Activated B cell treated with CpG ODN at 0.5 μM for 24 hours (primary cell): ENCODE measurements at regions of chr1 and their contacts with region 1.

Region 1: DNA sequence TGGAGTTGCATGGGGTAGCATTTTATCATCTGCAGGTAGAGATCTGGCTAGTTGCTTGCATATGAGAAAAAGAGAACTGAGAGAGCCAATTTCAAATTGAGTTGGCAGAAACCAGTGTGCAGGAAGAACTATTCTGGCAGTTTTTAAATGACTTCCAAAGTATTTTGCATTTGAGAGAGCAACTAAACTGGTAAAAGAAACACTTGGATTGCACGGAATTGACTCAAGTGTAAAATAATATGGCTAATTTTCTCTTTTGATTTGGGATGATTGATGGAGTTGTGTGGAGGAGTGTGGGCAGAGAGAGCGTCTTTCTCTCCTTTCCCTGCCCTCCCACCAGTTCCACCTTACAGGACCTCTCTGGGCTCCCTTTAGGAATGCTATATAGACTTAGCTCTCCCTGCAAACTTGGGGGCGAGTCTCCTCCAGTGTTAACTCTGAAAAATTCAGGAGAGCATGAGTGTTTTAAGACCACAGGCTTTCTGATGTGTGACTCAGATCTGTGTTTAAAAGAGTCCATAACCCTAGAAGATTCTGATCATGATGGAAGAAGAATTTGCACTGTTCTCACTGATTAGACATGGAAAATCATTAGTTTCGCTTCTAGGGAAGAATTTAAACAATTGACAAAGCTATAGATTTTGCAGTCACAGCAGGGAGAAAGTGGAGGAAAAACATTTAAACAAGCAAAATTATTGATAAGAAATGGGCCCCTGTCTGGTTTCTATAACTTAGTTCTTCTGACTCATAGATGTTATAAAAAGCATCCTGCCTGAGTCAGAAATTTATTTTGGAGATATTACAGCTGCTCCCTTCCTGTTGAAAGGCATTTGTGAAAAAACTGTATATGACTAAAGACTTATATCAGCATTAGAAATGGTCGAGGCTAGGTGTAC is 24.9 kb upstream of the CTBS start:
- DNase-seq: no peak
- ATAC-seq: peak; percentile 63
- H3K4me3 Mint-ChIP-seq: peak overlapping the region; percentile 53
- H3K27ac Mint-ChIP-seq: peak overlapping the region; percentile 88
- H3K4me1 Mint-ChIP-seq: peaks cover 17% of the 10 kb centered on the region
- H3K27me3 Mint-ChIP-seq: no peaks in the 10 kb centered on the region
- CTCF ChIP-seq: no peak

Region 2: GRCh38 chr1:84478876-84479868 is 119.9 kb before region 1 on chr1 and contains the start of gene RPF1:
- CTCF ChIA-PET with region 1: no interaction called
- POLR2A ChIA-PET with region 1: no interaction called
- intact Hi-C with region 1: no loop called
- DNase-seq: peak; percentile 64
- ATAC-seq: peak; percentile 96
- H3K4me3 Mint-ChIP-seq: peak within 1 kb of the TSS; percentile 97
- H3K27ac Mint-ChIP-seq: peak within 1 kb of the TSS; percentile 97
- H3K4me1 Mint-ChIP-seq: peaks cover 37% of the 10 kb centered on the region
- H3K27me3 Mint-ChIP-seq: peaks cover 21% of the 10 kb centered on the region
- CTCF ChIP-seq: no peak
- total RNA-seq, gene RPF1: 42.8 and 46.3 TPM in 2 replicates

Region 3: DNA sequence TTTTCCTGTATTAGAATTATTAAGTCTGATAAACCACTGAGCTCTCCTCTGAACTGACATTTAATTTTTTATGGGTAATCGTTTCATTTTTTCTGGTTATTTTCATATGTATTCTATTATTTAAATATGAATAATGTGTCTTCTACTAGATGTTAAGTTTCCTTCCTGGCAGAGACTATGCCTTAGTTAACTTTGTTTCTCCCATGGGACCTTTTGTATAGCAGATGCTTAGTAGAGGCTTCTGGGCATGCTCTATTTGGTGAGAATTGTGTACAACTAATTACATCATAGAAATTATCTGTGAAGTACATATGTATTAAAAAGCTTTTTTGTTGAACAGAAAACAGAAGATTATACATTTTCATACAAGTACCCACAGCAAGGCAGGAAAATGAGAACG is 48.3 kb before region 1 on chr1:
- CTCF ChIA-PET with region 1: no interaction called
- POLR2A ChIA-PET with region 1: no interaction called
- intact Hi-C with region 1: no loop called
- DNase-seq: no peak
- ATAC-seq: no peak
- H3K4me3 Mint-ChIP-seq: no peak overlapping the region
- H3K27ac Mint-ChIP-seq: no peak overlapping the region
- H3K4me1 Mint-ChIP-seq: no peaks in the 10 kb centered on the region
- H3K27me3 Mint-ChIP-seq: no peaks in the 10 kb centered on the region
- CTCF ChIP-seq: no peak

Region 4: DNA sequence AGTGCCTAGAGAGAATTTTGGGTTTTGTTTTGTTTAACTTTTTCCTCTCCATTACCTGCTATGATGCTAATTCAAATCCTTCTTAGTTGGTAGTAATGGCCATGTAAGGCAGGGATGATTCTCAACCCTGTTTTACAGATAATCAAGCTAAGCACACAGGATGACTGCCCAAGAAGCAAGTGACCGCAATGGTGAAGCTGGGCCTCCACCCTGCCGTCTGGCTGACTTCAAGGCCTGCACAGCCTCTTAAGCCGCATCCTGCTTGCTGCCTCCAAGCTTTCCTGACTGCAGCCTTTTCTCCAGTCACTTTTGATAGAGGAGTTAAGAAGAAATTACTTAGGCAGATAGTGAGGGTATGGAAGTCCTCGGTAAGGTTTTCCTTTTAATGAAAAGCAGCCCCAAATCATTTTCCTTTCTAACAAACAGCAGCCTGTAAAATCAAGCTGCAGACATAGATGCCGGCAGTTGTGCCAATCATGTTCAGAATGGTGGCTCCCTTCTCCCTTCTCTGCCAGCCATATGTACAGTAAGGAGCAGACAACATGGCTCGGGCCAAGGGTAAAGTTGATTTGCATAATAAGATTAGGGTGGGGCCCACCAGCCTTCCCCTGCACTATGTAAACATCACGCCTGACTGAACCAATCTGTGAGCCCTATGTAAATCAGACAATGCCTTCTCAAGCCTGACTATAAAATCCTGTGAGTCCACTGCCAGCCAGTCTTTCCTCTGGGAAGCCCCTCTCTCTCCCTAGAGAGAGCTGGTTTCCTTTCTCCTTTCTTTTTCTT is 16.1 kb before region 1 on chr1:
- CTCF ChIA-PET with region 1: no interaction called
- POLR2A ChIA-PET with region 1: no interaction called
- intact Hi-C with region 1: loop called (anchors 1 kb)
- DNase-seq: no peak
- ATAC-seq: peak; percentile 88
- H3K4me3 Mint-ChIP-seq: peak overlapping the region; percentile 21
- H3K27ac Mint-ChIP-seq: peak overlapping the region; percentile 72
- H3K4me1 Mint-ChIP-seq: peaks cover 24% of the 10 kb centered on the region
- H3K27me3 Mint-ChIP-seq: no peaks in the 10 kb centered on the region
- CTCF ChIP-seq: no peak

Region 5: DNA sequence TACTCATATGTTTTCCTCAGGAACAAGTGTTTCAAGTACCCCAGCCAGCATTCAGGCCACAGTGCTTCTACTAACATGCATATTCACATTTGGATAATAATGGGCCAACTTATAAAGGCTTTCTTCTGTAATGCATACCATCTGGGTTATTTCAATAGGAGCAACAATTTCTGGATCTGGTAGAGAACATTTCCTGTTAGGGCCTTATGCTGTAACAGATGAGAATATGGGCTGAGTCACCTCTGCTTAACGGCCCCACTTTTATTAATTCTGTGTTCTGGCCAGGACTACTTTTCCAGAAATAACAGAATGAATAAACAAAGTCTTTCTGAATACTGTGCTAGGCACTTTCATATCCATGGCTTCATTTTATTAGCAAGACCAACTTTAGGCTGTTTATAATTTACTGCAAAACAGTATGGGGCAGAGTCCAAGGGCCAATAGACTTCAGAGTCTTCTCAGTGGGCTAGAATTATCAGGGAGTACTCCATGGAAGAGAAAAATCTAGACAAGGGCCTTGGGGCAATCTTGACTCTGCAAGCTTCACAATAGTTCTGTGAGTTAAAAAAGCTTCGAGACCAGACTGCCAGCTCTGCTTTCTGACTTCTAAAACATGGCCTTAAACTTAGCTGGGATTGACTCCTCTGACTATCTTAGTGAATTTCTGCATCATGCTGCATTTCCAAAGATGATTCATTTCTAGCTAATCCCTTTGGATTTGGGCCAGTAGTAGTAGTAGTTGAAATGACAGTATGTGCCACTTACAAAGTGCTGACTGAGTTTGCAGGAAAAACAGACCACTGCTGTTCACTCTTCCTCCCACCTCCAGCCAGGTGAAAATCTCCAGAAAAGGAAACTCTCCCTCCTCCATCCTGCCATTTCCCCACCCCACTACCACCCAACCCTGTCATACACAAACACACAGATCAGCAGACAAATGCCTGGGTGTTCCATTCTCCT is 99.3 kb after region 1 on chr1:
- CTCF ChIA-PET with region 1: no interaction called
- POLR2A ChIA-PET with region 1: no interaction called
- intact Hi-C with region 1: no loop called
- DNase-seq: no peak
- ATAC-seq: no peak
- H3K4me3 Mint-ChIP-seq: no peak overlapping the region
- H3K27ac Mint-ChIP-seq: no peak overlapping the region
- H3K4me1 Mint-ChIP-seq: peaks cover 11% of the 10 kb centered on the region
- H3K27me3 Mint-ChIP-seq: peaks cover 4% of the 10 kb centered on the region
- CTCF ChIP-seq: no peak